ENCODE measurements at regions of chr7 and their contacts with region 1.

Region 1: DNA sequence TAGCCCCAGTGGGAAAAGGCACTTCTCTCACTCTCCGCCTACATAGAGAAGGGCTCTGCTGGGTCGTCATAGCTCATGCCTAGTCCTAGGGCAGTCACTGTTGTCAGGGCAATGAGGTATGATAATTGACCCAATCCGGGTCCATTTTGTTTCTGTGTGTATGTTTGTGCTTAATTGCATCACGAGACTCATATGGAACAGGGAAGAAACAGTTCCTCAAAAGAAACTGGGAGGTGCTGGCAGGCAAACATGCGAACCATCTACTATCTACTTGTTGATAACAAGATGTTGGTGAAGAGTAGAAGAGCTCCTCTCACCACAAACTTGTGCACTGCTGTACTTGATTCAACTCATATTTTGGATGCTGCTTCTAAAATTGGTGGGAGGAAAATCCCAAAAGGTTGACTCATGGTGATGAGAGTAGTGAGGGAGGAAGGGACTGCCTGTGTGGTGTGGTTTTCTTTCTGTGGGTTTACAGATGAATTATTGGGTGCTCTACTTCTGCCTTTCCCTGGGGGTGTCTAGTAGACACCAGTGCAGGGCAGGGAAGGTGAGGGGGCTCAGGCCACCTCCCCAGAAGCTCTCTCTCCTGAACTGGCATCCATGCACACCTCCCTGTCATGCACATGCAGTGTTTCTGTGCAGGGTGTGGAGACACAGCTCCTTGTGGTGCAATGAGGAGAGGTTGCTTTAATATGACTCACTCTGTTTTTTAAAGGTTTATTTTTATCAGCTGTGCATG is 29.4 kb downstream of the LSMEM1 start:
- DNase-seq: no peak
- H3K4me3 Mint-ChIP-seq: no peak overlapping the region
- H3K27ac Mint-ChIP-seq: peak overlapping the region; percentile 44
- H3K4me1 Mint-ChIP-seq: peaks cover 21% of the 10 kb centered on the region
- H3K27me3 Mint-ChIP-seq: no peaks in the 10 kb centered on the region

Region 2: DNA sequence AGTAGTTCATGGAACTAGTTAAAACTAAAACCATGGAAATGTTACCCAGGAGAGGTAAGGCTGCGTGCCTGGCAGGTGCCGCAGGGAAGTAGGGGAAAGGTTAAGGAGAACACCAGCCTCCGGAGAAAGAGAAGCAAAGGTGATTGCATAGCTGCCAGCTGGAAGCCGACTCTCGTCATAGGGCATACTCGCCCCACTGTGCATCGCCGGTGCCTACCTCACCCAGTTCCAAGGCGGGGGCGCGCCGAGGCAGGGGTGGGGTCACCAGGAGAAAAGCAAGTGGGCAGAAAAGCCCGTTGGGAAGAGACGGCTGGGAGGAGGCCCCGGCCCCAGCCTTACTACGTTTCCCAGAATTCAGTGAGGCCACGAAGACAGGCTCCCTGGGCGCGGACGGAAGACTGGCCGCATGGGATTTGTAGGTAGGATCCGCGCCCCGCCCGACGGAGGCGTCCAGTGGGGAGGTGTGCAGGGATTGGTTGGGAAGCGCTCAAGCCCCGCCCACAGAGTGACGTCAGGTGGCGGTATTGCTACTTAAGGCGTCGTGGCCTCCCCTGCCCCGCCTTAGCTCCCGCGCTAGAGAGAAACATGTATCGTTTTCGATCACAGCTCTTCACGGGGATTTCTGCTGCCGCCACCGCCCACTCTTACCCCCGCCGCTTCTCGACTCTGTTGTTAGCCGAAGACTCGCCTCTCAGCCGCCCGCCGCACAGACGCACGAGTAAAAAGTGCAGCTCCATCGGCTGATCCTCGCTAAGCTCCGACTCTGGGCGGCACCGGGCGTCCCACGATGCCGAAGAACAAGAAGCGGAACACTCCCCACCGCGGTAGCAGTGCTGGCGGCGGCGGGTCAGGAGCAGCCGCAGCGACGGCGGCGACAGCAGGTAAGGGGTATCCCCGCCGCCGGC is 60.0 kb before region 1 on chr7 and contains the start of gene IFRD1:
- intact Hi-C with region 1: loop called (anchors 1 kb)
- DNase-seq: peak; percentile 96
- H3K4me3 Mint-ChIP-seq: peak within 1 kb of the TSS; percentile 97
- H3K27ac Mint-ChIP-seq: peak within 1 kb of the TSS; percentile 98
- H3K4me1 Mint-ChIP-seq: peaks cover 50% of the 10 kb centered on the region
- H3K27me3 Mint-ChIP-seq: no peaks in the 10 kb centered on the region
- total RNA-seq, gene IFRD1: 49.5 and 51.7 TPM in 2 replicates